H1 (cell line): ENCODE measurements at regions of chr4 and their contacts with region 1.

Region 1: GRCh38 chr4:155025762-155026457 is 182.5 kb upstream of the NPY2R start:
- DNase-seq: peak; percentile 38 to 83
- H3K4me3 ChIP-seq: no peak overlapping the region
- H3K27ac ChIP-seq: no peak overlapping the region
- H3K4me1 ChIP-seq: peaks cover 0 to 1% (median 0%) of the 10 kb centered on the region in 4 experiments; a peak in 1 of 7 replicates
- H3K27me3 ChIP-seq: no peaks in the 10 kb centered on the region
- CTCF ChIP-seq: peak; percentile 87 to 99 (median 88)
- EP300 ChIP-seq: no peak
- POLR2A ChIP-seq: no peak
- RAD21 ChIP-seq: peak; percentile 82 to 88

Region 2: DNA sequence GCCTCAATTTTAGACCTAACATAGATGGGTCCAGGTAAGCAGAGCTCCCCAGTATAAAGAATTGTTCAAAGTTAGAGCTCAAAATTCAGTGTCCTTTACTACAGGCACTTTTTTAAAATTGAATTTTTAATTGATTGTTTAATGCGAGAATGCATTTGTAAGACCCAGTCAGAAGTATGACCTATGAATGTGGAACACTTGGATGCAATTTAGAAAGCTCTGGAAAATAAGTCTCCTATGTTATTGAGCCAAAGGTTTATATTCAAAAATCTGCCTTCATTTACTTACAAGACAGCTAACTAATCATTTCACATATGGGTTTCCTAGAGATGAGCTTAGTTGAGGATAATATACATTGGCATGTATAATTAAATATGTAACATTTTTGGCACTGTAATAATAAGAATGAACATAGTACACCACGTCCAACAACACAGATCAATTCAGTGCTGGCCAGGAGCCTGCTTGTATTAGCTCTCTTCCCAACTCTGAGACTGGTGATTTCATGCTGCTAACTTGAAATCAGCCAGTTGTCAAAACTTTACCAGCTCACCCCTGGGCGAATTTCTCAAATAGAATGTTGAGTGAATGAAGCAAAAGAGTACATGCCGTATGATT is 14.6 kb before region 1 on chr4:
- CTCF ChIA-PET with region 1: interaction called, 18 read pairs
- POLR2A ChIA-PET with region 1: no interaction called
- DNase-seq: no peak
- H3K4me3 ChIP-seq: no peak overlapping the region
- H3K27ac ChIP-seq: no peak overlapping the region
- H3K4me1 ChIP-seq: no peaks in the 10 kb centered on the region
- H3K27me3 ChIP-seq: no peaks in the 10 kb centered on the region
- CTCF ChIP-seq: no peak
- EP300 ChIP-seq: no peak
- POLR2A ChIP-seq: no peak
- RAD21 ChIP-seq: no peak

Region 3: DNA sequence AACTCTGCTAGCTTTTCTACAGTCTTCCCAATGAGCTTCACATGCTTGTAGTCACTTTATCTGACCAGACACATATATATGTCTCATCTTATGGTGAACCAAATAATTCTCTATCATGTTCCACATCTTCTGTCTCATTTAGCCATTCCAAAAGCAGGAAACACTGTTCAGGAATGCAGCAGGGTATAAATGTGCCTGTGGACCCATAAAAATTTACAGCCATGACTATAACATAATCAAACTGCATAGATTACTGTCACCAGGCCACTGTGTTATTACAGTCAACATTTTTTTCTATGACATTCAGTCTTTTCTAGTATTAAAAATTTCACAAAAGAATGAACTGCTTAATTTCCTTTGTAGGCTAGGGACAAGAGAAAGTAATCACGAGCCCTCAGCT is 12.5 kb after region 1 on chr4:
- CTCF ChIA-PET with region 1: interaction called, 51 read pairs
- POLR2A ChIA-PET with region 1: no interaction called
- DNase-seq: no peak
- H3K4me3 ChIP-seq: no peak overlapping the region
- H3K27ac ChIP-seq: no peak overlapping the region
- H3K4me1 ChIP-seq: no peaks in the 10 kb centered on the region
- H3K27me3 ChIP-seq: no peaks in the 10 kb centered on the region
- CTCF ChIP-seq: no peak
- EP300 ChIP-seq: no peak
- POLR2A ChIP-seq: no peak
- RAD21 ChIP-seq: no peak

Region 4: DNA sequence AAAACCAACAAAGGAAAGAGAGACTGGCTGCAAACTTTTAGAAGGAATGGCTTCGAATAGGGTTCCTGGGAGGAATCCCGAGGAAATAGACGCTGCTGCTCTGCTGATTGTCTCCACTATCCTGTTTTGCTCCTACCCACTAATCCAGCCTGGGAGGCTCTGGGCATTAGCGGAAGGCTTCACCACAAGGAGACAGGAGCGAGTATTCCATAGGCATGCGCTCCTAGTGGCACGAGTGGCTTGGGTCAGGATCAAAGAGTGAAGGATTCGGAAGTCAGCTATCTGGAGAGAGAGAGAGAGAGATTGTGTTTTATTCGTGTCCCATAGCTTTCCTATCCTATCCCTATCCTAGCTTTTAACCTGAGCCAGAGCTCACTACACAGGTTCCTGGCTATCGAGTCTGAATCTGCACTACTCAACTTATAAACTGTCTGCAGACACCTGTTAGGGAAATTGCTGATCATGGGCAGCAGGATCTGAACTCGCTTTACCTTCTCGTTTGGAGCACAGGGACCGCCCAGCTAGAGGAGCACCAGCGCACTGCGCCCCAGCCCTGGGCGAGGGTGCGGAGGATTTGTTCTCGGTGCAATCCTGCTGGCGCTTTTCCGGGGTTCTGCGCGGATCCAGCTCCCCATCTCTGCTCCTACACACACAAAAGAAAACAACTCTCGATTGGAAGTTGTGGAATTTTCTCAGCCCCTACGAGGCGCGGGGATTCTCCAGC is 181.8 kb after region 1 on chr4:
- CTCF ChIA-PET with region 1: interaction called, 14 read pairs
- POLR2A ChIA-PET with region 1: no interaction called
- DNase-seq: peak; percentile 19 to 52
- H3K4me3 ChIP-seq: peak overlapping the region; percentile 61 to 74 (median 68)
- H3K27ac ChIP-seq: no peak overlapping the region
- H3K4me1 ChIP-seq: peaks cover 0 to 4% (median 1%) of the 10 kb centered on the region in 4 experiments; a peak in 2 of 7 replicates
- H3K27me3 ChIP-seq: peaks cover 1 to 25% (median 15%) of the 10 kb centered on the region in 4 experiments; a peak in 6 of 7 replicates
- CTCF ChIP-seq: peak; percentile 45 to 89 (median 67)
- EP300 ChIP-seq: no peak
- POLR2A ChIP-seq: no peak
- RAD21 ChIP-seq: peak; percentile 42 to 49; a peak in 3 of 4 replicates

Region 5: DNA sequence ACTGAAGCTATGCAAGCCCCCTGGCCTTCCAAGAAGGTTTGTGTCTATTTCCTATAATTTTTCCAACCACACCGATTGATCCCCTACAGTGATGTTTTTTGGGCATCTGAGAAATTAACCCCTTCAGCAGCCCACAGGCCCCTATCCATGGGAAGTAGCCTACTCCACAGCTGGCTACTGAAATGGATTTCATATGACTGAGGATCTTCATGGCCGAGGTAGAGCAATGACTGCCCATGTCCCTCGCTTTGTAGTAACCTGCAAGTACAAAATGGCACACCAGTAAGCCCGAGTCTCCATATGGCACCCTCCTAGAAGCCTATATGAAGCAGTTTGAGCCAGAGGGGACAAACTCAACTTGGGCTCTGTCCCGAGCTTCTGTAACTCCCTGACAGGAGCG is 314.1 kb after region 1 on chr4:
- CTCF ChIA-PET with region 1: interaction called, 10 read pairs
- POLR2A ChIA-PET with region 1: no interaction called
- DNase-seq: no peak
- H3K4me3 ChIP-seq: no peak overlapping the region
- H3K27ac ChIP-seq: no peak overlapping the region
- H3K4me1 ChIP-seq: no peaks in the 10 kb centered on the region
- H3K27me3 ChIP-seq: no peaks in the 10 kb centered on the region
- CTCF ChIP-seq: no peak
- EP300 ChIP-seq: no peak
- POLR2A ChIP-seq: no peak
- RAD21 ChIP-seq: no peak

Region 6: GRCh38 chr4:155353923-155354540 is 328.1 kb after region 1 on chr4:
- CTCF ChIA-PET with region 1: interaction called, 49 read pairs
- POLR2A ChIA-PET with region 1: no interaction called
- DNase-seq: peak in 1 of 2 experiments; percentile 78
- H3K4me3 ChIP-seq: no peak overlapping the region
- H3K27ac ChIP-seq: no peak overlapping the region
- H3K4me1 ChIP-seq: no peaks in the 10 kb centered on the region
- H3K27me3 ChIP-seq: no peaks in the 10 kb centered on the region
- CTCF ChIP-seq: peak; percentile 74 to 78 (median 75)
- EP300 ChIP-seq: no peak
- POLR2A ChIP-seq: no peak
- RAD21 ChIP-seq: peak; percentile 88 to 89